H1 (cell line): ENCODE measurements at regions of chr2 and their contacts with region 1.

Region 1: DNA sequence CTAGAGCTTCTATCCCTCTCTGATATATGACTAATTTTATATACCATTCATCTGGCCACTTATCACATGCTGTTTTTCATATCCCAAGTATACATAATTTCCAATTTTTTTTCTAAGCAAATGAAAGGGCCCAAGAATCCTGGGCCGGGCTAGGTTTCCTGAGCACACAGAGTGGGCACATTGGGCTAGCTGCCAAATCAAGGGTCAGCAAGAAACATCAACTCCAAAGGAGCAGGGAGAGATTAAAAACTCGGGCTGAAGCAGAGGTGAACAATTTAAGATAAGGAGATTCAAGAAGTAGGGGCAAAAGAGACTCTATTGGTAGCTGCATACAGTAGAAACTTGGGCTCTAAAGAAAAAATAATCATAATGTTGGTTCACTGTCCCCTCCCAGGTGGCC is 39.0 kb downstream of the OLA1 start:
- DNase-seq: no peak
- H3K4me3 ChIP-seq: no peak overlapping the region
- H3K27ac ChIP-seq: no peak overlapping the region
- H3K4me1 ChIP-seq: no peaks in the 10 kb centered on the region
- H3K27me3 ChIP-seq: no peaks in the 10 kb centered on the region
- CTCF ChIP-seq: no peak
- EP300 ChIP-seq: no peak
- POLR2A ChIP-seq: no peak
- RAD21 ChIP-seq: no peak

Region 2: DNA sequence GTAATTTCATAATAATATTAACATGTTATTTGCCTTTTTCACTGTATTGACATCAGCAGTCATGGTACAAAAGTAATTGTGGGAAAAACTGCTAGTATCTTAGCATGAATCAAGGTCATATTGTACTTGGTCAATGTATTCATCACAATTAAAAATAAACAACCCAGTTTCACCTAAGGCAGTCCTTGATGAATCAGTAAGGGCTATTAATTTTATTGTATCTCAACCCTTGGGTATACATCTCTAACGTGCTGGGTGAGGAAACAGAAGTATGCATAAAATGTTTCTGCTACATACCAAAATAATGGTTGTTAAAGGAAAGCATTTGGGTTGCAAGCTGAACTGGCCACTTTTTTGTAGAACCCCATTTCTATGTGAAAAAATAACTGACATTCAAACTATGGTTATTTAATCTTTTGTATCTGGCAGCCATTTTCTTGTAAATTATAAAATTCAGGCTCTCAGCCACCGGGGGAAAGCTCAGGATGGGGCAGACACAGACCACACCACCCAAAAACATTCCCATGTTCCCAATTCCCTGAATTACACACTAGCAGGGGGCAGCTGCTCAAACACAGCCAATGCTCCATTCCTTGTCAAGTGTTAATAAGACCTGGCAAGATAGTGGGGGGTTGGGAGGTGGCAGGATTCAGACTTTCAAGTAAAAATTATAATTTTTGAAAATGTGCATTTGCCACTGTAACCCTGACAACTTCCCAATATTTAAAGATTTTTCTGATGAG is 10.3 kb before region 1 on chr2:
- CTCF ChIA-PET with region 1: interaction called, 11 read pairs
- POLR2A ChIA-PET with region 1: interaction called, 9 read pairs
- DNase-seq: no peak
- H3K4me3 ChIP-seq: no peak overlapping the region
- H3K27ac ChIP-seq: no peak overlapping the region
- H3K4me1 ChIP-seq: peaks cover 0 to 3% (median 2%) of the 10 kb centered on the region in 4 experiments; a peak in 3 of 7 replicates
- H3K27me3 ChIP-seq: no peaks in the 10 kb centered on the region
- CTCF ChIP-seq: no peak
- EP300 ChIP-seq: no peak
- POLR2A ChIP-seq: no peak
- RAD21 ChIP-seq: no peak

Region 3: GRCh38 chr2:174223388-174223787 is 14.1 kb after region 1 on chr2:
- CTCF ChIA-PET with region 1: interaction called, 10 read pairs
- POLR2A ChIA-PET with region 1: interaction called, 3 read pairs
- DNase-seq: no peak
- H3K4me3 ChIP-seq: no peak overlapping the region
- H3K27ac ChIP-seq: no peak overlapping the region
- H3K4me1 ChIP-seq: peaks cover 0 to 3% (median 0%) of the 10 kb centered on the region in 4 experiments; a peak in 1 of 7 replicates
- H3K27me3 ChIP-seq: no peaks in the 10 kb centered on the region
- CTCF ChIP-seq: no peak
- EP300 ChIP-seq: no peak
- POLR2A ChIP-seq: no peak
- RAD21 ChIP-seq: no peak